ENCODE measurements at regions of chr7 and their contacts with region 1.

Region 1: DNA sequence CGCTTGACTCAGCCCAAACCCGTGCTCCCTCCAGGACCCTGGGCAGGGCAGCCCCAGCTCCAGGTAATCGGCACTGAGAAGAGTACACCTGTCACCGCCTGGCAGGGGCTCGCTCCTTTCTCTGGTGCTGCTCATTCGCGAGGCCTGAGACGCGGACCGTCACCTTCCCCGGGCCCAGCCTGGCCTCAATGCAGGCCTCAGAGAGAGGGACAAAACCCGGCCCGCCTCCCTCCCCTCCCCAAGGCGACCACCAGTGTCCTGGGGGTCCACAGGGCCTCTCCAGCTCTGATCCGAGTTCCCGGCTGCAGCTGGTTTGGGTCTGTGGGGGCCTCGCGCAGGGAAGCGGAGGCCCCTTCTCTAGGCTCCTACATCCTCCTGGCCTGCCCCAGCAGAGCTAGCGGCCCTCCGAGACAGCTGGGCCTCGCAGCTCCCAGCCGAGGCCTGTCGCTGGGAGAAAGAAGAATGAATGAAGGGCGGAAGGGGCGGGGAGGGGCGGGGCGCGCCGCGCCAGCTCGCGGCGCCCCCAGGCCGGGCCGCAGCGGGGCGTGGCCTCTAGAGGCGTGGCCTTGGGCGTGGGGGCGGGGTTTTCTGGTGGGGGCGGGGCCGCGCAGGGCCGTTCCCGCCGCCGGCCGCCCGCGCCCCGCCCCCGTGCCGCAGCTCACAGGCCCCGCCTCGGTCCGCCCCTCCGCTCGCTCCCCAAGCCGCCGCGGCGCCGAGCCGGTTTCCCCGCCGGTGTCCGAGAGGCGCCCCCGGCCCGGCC is at the start of gene LIMK1:
- DNase-seq: peak; percentile 67 to 90 (median 82)
- ATAC-seq: peak; percentile 87 to 90
- H3K4me3 Mint-ChIP-seq: peak within 1 kb of the TSS; percentile 74 to 89 (median 82)
- H3K27ac Mint-ChIP-seq: peak within 1 kb of the TSS in 9 of 10 donors; percentile 8 to 90 (median 84)
- H3K4me1 Mint-ChIP-seq: peaks cover 9 to 18% (median 13%) of the 10 kb centered on the region in 4 donors
- H3K27me3 Mint-ChIP-seq: no peaks in the 10 kb centered on the region
- polyA plus RNA-seq, gene LIMK1: 2.8 to 4.8 (median 3.4) TPM

Region 2: DNA sequence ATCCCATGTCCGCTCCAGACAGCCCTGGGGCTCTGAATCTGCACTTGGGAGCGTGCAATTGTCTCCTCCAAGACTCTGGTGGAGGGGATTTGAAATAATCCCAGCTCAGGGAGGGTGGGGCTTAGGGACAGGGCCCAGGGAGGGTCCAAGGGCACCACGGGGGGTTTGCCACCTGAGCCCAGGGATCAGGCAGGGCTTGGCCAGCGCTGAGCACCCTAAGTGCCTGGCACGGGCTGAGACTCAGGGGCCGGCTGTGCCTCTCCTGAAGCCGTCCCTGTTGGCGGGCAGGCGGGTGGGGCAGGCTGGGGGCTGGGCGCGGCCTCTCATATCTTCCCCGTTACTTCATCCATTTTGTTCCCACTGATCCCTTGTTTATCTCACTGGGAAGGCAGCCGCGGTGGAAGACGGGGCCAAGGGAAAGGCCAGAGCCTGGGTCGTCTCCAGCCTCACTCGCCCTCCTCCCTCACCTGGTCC is 97.1 kb before region 1 on chr7:
- POLR2A ChIA-PET with region 1: no interaction called
- DNase-seq: no peak
- ATAC-seq: no peak
- H3K4me3 Mint-ChIP-seq: no peak overlapping the region
- H3K27ac Mint-ChIP-seq: no peak overlapping the region
- H3K4me1 Mint-ChIP-seq: no peaks in the 10 kb centered on the region
- H3K27me3 Mint-ChIP-seq: peaks cover 0 to 11% (median 1%) of the 10 kb centered on the region in 5 donors

Region 3: GRCh38 chr7:74094224-74095101 is 11.2 kb after region 1 on chr7:
- POLR2A ChIA-PET with region 1: interaction called, 33 read pairs
- DNase-seq: peak; percentile 33 to 82 (median 54)
- ATAC-seq: peak; percentile 78 to 83
- H3K4me3 Mint-ChIP-seq: peak overlapping the region; percentile 77 to 93 (median 89)
- H3K27ac Mint-ChIP-seq: peak overlapping the region; percentile 79 to 97 (median 95)
- H3K4me1 Mint-ChIP-seq: peaks cover 10 to 32% (median 25%) of the 10 kb centered on the region in 4 donors
- H3K27me3 Mint-ChIP-seq: no peaks in the 10 kb centered on the region

Region 4: GRCh38 chr7:74173866-74174605 is 90.7 kb after region 1 on chr7 and contains the start of gene EIF4H:
- POLR2A ChIA-PET with region 1: interaction called, 30 read pairs
- DNase-seq: peak; percentile 86 to 97 (median 95)
- ATAC-seq: peak; percentile 82 to 87
- H3K4me3 Mint-ChIP-seq: peak within 1 kb of the TSS; percentile 84 to 95 (median 90)
- H3K27ac Mint-ChIP-seq: peak within 1 kb of the TSS; percentile 85 to 97 (median 94)
- H3K4me1 Mint-ChIP-seq: peaks cover 15 to 52% (median 48%) of the 10 kb centered on the region in 4 donors
- H3K27me3 Mint-ChIP-seq: no peaks in the 10 kb centered on the region
- polyA plus RNA-seq, gene EIF4H: 219 to 239 (median 221) TPM